ENCODE measurements at regions of chr11 and their contacts with region 1.

Region 1: GRCh38 chr11:22617868-22618267 is 7.8 kb downstream of the FANCF start:
- DNase-seq: no peak
- ATAC-seq: no peak
- H3K4me3 ChIP-seq: no peak overlapping the region
- H3K27ac ChIP-seq: no peak overlapping the region
- H3K4me1 ChIP-seq: no peaks in the 10 kb centered on the region
- H3K27me3 ChIP-seq: no peaks in the 10 kb centered on the region
- CTCF ChIP-seq: no peak

Region 2: DNA sequence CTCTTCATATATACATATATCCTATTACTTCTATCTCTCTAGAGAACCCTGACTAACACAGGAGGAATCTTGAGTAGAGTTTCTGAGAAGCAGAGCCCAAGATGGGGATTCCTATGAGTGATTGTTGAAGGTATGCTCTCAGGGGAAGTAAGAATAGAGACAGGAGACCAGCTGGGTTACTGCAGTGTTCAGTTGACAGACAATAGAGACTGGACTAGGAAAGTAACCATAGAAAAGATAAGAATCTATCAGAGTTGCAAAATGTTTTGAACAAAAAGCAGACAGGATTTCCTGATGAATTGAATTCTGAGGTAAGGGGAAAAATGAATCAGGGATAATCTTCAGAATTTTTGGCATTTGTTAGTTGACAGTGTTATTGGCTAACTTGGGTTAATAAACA is 225.3 kb before region 1 on chr11:
- intact Hi-C with region 1: no loop called
- DNase-seq: no peak
- ATAC-seq: no peak
- H3K4me3 ChIP-seq: no peak overlapping the region
- H3K27ac ChIP-seq: no peak overlapping the region
- H3K4me1 ChIP-seq: peaks cover 0 to 4% (median 0%) of the 10 kb centered on the region in 9 donors
- H3K27me3 ChIP-seq: peaks cover 0 to 5% (median 0%) of the 10 kb centered on the region in 7 donors
- CTCF ChIP-seq: no peak

Region 3: DNA sequence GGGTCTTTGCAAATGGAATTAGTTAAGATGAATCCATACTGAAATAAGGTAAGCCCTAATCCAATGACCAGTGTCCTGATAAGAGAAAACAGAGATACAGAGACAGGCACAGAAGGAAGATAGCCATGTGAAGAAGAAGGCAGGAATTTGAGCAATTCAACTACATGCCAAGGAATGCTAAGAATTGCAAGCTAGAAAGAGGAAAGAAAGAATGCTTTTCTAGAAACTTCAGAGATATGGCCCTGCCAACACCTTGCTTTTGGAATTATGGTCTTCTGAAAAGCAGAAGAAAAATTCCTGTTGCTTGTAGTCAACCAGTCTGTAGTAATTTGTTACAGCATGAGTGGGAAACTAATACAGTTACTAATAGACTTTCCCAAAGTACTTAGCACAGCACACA is 168.4 kb before region 1 on chr11:
- intact Hi-C with region 1: loop called in 1 of 10 experiments (anchors 10 kb)
- DNase-seq: no peak
- ATAC-seq: no peak
- H3K4me3 ChIP-seq: no peak overlapping the region
- H3K27ac ChIP-seq: no peak overlapping the region
- H3K4me1 ChIP-seq: no peaks in the 10 kb centered on the region
- H3K27me3 ChIP-seq: no peaks in the 10 kb centered on the region
- CTCF ChIP-seq: no peak

Measured in heart right ventricle (tissue), 16 donors.